Activated CD4-positive, alpha-beta T cell treated with anti-CD3 and anti-CD28 coated beads for 36 hours (primary cell): ENCODE measurements at regions of chr15 and their contacts with region 1.

Region 1: DNA sequence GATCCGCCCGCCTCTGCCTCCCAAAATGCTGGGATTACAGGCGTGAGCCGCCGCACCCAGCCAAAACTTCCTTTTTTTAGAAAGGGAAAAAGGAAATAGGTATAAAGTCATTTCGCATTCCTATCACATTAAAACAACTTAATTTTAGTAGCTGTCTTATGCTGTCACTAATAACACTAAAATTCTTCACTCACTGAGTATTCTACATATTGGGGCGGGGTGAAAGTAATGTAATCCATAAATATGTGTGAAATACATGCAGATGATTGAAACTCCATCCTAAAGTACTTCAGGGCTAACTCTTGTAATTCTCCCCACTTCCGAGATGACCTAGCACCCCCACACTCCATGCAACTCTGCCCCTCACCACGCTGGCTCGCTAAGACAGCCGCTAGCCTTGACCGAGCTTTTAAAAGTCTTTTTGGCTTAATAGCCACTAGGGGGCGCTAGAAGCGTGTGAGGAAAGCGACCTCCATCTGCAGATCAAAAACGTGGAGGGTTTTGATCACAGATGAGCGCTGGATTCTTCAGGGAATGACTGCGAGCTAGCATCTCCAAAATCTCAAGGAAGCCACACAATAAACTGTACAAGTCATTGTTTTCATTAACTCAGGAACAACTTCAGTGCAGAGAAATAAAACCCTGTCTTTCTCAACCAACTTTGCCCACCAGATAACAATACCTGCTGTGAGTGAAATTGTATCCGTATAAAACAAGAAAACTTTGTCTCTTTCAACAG is 129.3 kb upstream of the IGF1R start:
- DNase-seq: peak; percentile 70
- ATAC-seq: peak; percentile 85
- H3K4me3 Mint-ChIP-seq: no peak overlapping the region
- H3K27ac Mint-ChIP-seq: no peak overlapping the region
- H3K4me1 Mint-ChIP-seq: no peaks in the 10 kb centered on the region
- H3K27me3 Mint-ChIP-seq: peaks cover 3% of the 10 kb centered on the region

Region 2: DNA sequence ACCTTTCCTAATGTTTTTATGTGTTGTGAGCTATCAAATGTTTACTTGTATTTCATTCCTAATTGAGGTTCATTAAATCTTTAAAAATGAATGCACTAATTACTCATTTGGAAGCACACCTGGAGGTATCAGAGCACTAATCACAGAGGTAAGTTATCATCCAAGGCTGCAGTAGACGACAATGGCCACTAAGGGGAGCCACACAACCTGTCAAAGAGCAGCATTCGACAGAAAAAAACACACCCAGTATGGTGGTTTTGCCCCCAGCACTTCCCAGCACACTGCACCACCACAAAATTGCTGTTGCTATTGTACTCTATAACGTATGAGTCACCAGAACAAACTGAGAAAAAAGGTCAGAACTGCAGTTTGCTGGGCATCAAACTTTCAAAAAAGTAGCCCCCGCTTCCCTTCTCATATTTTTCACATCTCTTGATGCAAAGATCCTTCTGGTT is 76.6 kb before region 1 on chr15:
- CTCF ChIA-PET with region 1: interaction called, 4 read pairs
- POLR2A ChIA-PET with region 1: no interaction called
- intact Hi-C with region 1: loop called in 1 of 2 experiments (anchors 1 kb)
- DNase-seq: peak; percentile 81
- ATAC-seq: peak; percentile 97
- H3K4me3 Mint-ChIP-seq: no peak overlapping the region
- H3K27ac Mint-ChIP-seq: no peak overlapping the region
- H3K4me1 Mint-ChIP-seq: peaks cover 3% of the 10 kb centered on the region
- H3K27me3 Mint-ChIP-seq: peaks cover 9% of the 10 kb centered on the region

Region 3: GRCh38 chr15:98658831-98659699 is 140.1 kb after region 1 on chr15:
- CTCF ChIA-PET with region 1: interaction called, 39 read pairs
- POLR2A ChIA-PET with region 1: no interaction called
- intact Hi-C with region 1: loop called (anchors 1 kb)
- DNase-seq: peak; percentile 40
- ATAC-seq: peak; percentile 81
- H3K4me3 Mint-ChIP-seq: no peak overlapping the region
- H3K27ac Mint-ChIP-seq: no peak overlapping the region
- H3K4me1 Mint-ChIP-seq: peaks cover 41% of the 10 kb centered on the region
- H3K27me3 Mint-ChIP-seq: no peaks in the 10 kb centered on the region

Region 4: DNA sequence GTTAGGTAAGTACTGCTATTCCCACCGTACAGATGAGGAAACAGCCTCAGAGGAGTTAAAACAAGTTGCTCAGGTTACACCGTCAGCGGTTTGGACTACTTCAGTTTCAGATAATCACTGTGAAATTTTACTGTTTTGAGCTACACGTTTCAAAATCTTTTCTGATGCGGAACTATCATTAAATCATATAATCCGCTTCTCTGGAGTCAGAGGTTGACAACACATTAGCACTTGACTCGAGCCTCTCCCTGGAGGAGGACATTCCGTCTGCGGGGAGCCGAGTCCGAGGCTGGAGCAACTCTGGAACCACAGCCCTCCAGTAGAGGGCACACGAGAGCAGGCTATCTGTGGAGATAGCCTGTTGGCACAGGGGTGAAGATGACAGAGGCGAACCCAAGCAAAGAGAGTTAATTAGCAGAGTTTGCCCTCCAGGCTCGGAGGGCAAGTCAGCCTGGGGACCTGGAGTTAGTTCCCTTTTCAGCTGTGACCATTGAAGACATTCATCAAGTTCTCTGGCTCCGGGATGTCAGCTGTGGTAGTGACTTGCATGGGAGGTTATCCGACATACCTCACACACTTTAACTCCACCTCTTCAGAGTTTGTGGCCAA is 260.6 kb after region 1 on chr15:
- CTCF ChIA-PET with region 1: interaction called, 3 read pairs
- POLR2A ChIA-PET with region 1: no interaction called
- intact Hi-C with region 1: loop called (anchors 5 kb)
- DNase-seq: peak; percentile 87
- ATAC-seq: peak; percentile 90
- H3K4me3 Mint-ChIP-seq: no peak overlapping the region
- H3K27ac Mint-ChIP-seq: no peak overlapping the region
- H3K4me1 Mint-ChIP-seq: peaks cover 43% of the 10 kb centered on the region
- H3K27me3 Mint-ChIP-seq: no peaks in the 10 kb centered on the region

Region 5: DNA sequence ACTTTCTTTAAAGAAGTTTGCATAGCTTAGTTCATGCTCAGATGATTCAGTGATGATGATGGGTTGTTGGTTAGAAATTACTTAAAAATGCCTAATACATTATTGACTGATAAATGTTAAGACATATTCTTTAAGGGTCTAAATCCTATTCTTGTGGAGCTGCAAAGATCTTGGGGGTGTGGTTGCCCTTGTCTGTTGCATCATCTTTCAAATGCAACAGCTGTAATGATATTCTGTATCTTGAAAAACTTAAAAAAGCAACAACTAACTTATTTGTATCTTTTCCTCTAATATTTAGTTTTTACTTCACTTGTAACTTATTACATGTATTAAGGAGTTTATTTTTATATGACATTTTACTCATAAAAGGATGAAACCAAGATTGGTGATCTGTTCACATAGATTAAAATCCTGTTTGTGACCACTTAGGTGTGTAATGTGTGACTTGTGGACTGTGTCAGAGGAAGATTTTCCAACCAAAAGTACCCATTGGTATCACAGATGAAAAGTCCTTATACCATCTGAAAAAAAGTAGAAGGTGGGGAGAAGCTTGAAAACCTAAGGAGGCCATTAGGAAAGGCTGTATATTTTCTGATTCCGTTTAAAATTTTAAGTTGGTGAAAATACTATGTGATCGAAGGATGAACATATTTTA is 272.2 kb after region 1 on chr15:
- CTCF ChIA-PET with region 1: no interaction called
- POLR2A ChIA-PET with region 1: no interaction called
- intact Hi-C with region 1: no loop called
- DNase-seq: no peak
- ATAC-seq: no peak
- H3K4me3 Mint-ChIP-seq: no peak overlapping the region
- H3K27ac Mint-ChIP-seq: no peak overlapping the region
- H3K4me1 Mint-ChIP-seq: peaks cover 73% of the 10 kb centered on the region
- H3K27me3 Mint-ChIP-seq: no peaks in the 10 kb centered on the region

Region 6: DNA sequence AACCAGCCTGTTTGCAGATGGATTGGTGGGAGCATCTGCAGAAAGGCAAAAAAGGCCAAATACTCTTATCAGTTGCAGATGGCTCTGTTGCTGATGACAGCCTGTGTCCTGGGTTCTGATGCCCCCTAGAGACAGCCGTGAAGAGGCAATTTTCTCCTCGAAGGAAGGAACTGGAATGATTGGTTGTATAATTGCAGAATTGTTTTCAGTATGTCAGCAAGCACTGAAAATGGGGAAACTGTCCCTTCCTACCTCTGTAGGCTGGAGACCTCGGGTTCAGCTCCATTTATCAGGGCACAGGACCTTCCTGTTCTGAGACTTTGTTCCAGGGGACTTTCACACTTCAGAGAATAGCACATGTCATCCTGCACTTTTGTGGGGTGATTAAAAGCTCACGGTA is 385.6 kb after region 1 on chr15:
- CTCF ChIA-PET with region 1: interaction called, 3 read pairs
- POLR2A ChIA-PET with region 1: no interaction called
- intact Hi-C with region 1: loop called (anchors 1 to 10 kb)
- DNase-seq: peak; percentile 27
- ATAC-seq: peak; percentile 49
- H3K4me3 Mint-ChIP-seq: no peak overlapping the region
- H3K27ac Mint-ChIP-seq: no peak overlapping the region
- H3K4me1 Mint-ChIP-seq: peaks cover 18% of the 10 kb centered on the region
- H3K27me3 Mint-ChIP-seq: no peaks in the 10 kb centered on the region

Region 7: GRCh38 chr15:99076552-99077308 is 557.7 kb after region 1 on chr15:
- CTCF ChIA-PET with region 1: interaction called, 17 read pairs
- POLR2A ChIA-PET with region 1: no interaction called
- intact Hi-C with region 1: loop called (anchors 1 to 5 kb)
- DNase-seq: peak; percentile 58
- ATAC-seq: peak; percentile 87
- H3K4me3 Mint-ChIP-seq: peak overlapping the region; percentile 65
- H3K27ac Mint-ChIP-seq: peak overlapping the region; percentile 89
- H3K4me1 Mint-ChIP-seq: peaks cover 6% of the 10 kb centered on the region
- H3K27me3 Mint-ChIP-seq: peaks cover 10% of the 10 kb centered on the region